MCF 10A (cell line): ENCODE measurements at regions of chr14 and their contacts with region 1.

Region 1: GRCh38 chr14:31937721-31938346 is 139.3 kb upstream of the ARHGAP5 start:
- DNase-seq: peak; percentile 87
- H3K4me3 Mint-ChIP-seq: no peak overlapping the region
- H3K27ac Mint-ChIP-seq: peak overlapping the region; percentile 83
- H3K4me1 Mint-ChIP-seq: peaks cover 28% of the 10 kb centered on the region
- H3K27me3 Mint-ChIP-seq: no peaks in the 10 kb centered on the region
- CTCF ChIP-seq: no peak

Region 2: DNA sequence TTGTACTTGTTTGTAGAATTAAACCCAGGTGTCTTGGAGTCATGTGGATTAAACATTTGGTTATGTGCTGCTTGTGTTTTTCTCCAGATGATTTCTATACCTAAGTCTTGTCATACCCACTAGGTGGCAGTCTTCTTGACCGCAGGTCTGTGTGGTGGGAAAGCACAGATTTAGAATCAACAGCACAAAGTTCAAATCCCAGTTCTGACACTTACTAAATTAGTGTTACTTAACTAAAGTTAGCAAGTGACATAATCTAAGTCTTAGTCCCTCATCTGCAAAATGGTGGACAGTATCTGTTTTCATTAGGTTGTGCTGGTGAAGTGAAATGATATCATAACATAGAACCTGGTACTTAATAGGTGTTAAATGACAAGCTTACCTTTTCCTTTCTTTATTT is 11.7 kb before region 1 on chr14:
- CTCF ChIA-PET with region 1: interaction called, 21 read pairs
- POLR2A ChIA-PET with region 1: interaction called, 8 read pairs
- intact Hi-C with region 1: no loop called
- DNase-seq: peak; percentile 49
- H3K4me3 Mint-ChIP-seq: no peak overlapping the region
- H3K27ac Mint-ChIP-seq: no peak overlapping the region
- H3K4me1 Mint-ChIP-seq: peaks cover 21% of the 10 kb centered on the region
- H3K27me3 Mint-ChIP-seq: no peaks in the 10 kb centered on the region
- CTCF ChIP-seq: peak; percentile 39

Region 3: GRCh38 chr14:32070282-32070681 is 132.4 kb after region 1 on chr14:
- CTCF ChIA-PET with region 1: interaction called, 23 read pairs
- POLR2A ChIA-PET with region 1: interaction called, 74 read pairs
- intact Hi-C with region 1: loop called (anchors 1 kb)
- DNase-seq: no peak
- H3K4me3 Mint-ChIP-seq: no peak overlapping the region
- H3K27ac Mint-ChIP-seq: no peak overlapping the region
- H3K4me1 Mint-ChIP-seq: peaks cover 11% of the 10 kb centered on the region
- H3K27me3 Mint-ChIP-seq: no peaks in the 10 kb centered on the region
- CTCF ChIP-seq: no peak

Region 4: DNA sequence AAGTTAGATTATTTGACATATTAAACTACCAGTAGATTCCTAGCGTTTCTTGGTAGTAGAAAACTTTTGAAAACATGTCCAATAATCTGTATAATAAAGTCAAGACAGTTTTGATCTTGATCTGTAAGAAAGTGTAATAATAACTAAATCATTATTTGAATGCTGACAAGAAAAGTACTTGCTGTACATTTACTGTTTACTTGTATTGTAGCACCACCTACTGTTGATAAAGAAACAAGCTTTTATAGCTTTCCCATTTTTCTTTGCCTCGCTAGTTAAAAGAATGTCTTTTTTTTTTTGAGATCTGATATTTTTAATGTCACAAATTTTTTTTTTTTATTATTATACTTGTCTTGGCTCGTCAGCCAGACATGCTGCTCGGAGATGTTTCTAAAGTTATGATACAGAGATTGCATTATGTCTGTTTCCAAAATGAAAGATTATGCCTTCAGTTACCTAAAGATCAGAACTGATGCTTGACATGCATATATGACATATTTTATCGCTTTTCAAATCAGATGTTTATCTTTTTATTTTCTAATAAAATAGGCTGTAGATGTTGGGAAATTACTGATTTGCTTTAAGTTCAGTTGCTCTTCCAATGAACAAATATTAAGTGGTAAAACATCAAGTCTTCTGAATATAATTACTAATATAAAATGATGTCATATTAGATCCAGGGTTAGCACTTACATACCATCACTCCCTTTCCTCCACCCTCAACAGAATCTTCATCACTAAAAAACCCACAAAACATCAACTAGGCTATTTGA is 531.7 kb after region 1 on chr14:
- CTCF ChIA-PET with region 1: interaction called, 4 read pairs
- POLR2A ChIA-PET with region 1: interaction called, 4 read pairs
- intact Hi-C with region 1: loop called (anchors 2 kb)
- DNase-seq: peak; percentile 50
- H3K4me3 Mint-ChIP-seq: no peak overlapping the region
- H3K27ac Mint-ChIP-seq: peak overlapping the region; percentile 76
- H3K4me1 Mint-ChIP-seq: peaks cover 47% of the 10 kb centered on the region
- H3K27me3 Mint-ChIP-seq: no peaks in the 10 kb centered on the region
- CTCF ChIP-seq: peak; percentile 45